ENCODE measurements at regions of chr11 and their contacts with region 1.

Region 1: GRCh38 chr11:72430741-72431570 is 3.4 kb downstream of the CLPB start:
- DNase-seq: peak; percentile 83
- H3K4me3 Mint-ChIP-seq: peak overlapping the region; percentile 46
- H3K27ac Mint-ChIP-seq: peak overlapping the region; percentile 73
- H3K4me1 Mint-ChIP-seq: peaks cover 35% of the 10 kb centered on the region
- H3K27me3 Mint-ChIP-seq: no peaks in the 10 kb centered on the region

Region 2: GRCh38 chr11:71977743-71978418 is 453.1 kb before region 1 on chr11:
- intact Hi-C with region 1: loop called (anchors 5 kb)
- DNase-seq: peak; percentile 89
- H3K4me3 Mint-ChIP-seq: no peak overlapping the region
- H3K27ac Mint-ChIP-seq: peak overlapping the region; percentile 62
- H3K4me1 Mint-ChIP-seq: peaks cover 5% of the 10 kb centered on the region
- H3K27me3 Mint-ChIP-seq: no peaks in the 10 kb centered on the region

Region 3: GRCh38 chr11:72080256-72080974 is 350.5 kb before region 1 on chr11 and contains the starts of genes LRRC51 and NUMA1:
- intact Hi-C with region 1: loop called (anchors 1 kb)
- DNase-seq: peak; percentile 100
- H3K4me3 Mint-ChIP-seq: peak within 1 kb of the TSS; percentile 96
- H3K27ac Mint-ChIP-seq: peak within 1 kb of the TSS; percentile 94
- H3K4me1 Mint-ChIP-seq: peaks cover 46% of the 10 kb centered on the region
- H3K27me3 Mint-ChIP-seq: no peaks in the 10 kb centered on the region
- total RNA-seq, gene LRRC51: 7.0 and 7.1 TPM in 2 replicates
- total RNA-seq, gene NUMA1: 138 and 149 TPM in 2 replicates

Region 4: GRCh38 chr11:72244361-72245262 is 186.3 kb before region 1 on chr11:
- intact Hi-C with region 1: loop called (anchors 5 kb)
- DNase-seq: no peak
- H3K4me3 Mint-ChIP-seq: no peak overlapping the region
- H3K27ac Mint-ChIP-seq: no peak overlapping the region
- H3K4me1 Mint-ChIP-seq: peaks cover 16% of the 10 kb centered on the region
- H3K27me3 Mint-ChIP-seq: peaks cover 48% of the 10 kb centered on the region

Region 5: GRCh38 chr11:72326151-72326848 is 104.7 kb before region 1 on chr11:
- intact Hi-C with region 1: loop called (anchors 2 kb)
- DNase-seq: no peak
- H3K4me3 Mint-ChIP-seq: peak overlapping the region; percentile 6
- H3K27ac Mint-ChIP-seq: peak overlapping the region; percentile 85
- H3K4me1 Mint-ChIP-seq: peaks cover 32% of the 10 kb centered on the region
- H3K27me3 Mint-ChIP-seq: no peaks in the 10 kb centered on the region

Region 6: GRCh38 chr11:72468289-72468688 is 37.3 kb after region 1 on chr11:
- intact Hi-C with region 1: no loop called
- DNase-seq: no peak
- H3K4me3 Mint-ChIP-seq: no peak overlapping the region
- H3K27ac Mint-ChIP-seq: no peak overlapping the region
- H3K4me1 Mint-ChIP-seq: peaks cover 2% of the 10 kb centered on the region
- H3K27me3 Mint-ChIP-seq: peaks cover 53% of the 10 kb centered on the region

Measured in activated CD4-positive, alpha-beta T cell treated with anti-CD3 and anti-CD28 coated beads, Interleukin-2, amount 10 ng/mL, durations not matched to agents 24 days and 14 days (primary cell).